Head of caudate nucleus (tissue), 42 donors: ENCODE measurements at regions of chr2 and their contacts with region 1.

Region 1: GRCh38 chr2:175366815-175367214 is 185.3 kb upstream of the ATP5MC3 start:
- DNase-seq: peak in 32 of 42 donors; percentile 4 to 63 (median 32)

Region 2: DNA sequence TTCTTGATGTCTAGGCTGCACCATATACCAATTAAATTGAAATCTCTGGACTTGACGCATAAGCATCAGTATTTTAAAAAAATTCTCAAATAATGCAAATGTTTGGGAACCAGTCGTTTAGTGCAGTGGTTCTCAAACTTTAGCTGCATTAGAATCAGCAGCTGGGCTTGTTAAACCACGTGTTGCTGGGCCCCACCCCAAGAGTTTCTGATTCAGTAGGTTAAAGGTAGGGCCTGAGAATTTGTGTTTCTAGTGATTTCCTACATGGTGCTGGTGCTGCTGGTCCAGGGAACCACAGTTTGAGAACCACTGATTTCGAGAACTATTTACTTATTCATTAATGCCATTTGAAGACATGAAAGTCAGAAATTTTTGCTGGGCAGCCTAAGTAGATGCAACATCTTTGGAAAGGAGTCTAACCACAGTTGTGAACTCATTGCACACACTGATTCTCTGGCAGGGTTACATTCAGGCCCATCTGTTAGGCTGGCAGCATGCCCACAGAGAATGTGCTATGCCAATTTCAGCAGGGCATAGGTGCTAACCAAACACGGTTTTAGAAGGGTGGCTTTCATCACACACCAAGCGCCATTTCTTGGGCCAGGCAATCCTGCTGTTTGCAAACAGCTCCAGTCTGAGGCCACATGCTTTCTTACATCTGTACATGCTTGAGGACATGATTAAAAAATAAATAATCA is 158.9 kb before region 1 on chr2:
- intact Hi-C with region 1: no loop called
- DNase-seq: peak in 21 of 42 donors; percentile 1 to 47 (median 17)

Region 3: DNA sequence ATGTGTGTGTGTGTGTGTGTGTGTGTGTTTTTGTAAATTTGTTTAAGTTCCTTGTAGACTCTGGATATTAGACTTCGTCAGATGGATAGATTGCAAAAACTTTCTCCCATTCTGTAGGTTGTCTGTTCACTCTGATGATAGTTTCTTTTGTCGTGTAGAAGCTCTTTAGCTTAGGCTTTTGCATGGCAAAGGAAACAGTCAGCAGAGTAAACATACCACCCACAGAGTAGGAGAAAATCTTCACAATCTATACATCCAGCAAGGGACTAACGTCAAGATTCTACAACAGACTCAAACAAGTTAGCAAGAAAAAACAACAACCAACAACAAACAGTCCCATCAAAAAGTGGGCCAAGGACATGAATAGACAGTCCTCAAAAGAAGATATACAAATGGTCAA is 151.4 kb after region 1 on chr2:
- intact Hi-C with region 1: no loop called
- DNase-seq: no peak

Region 4: DNA sequence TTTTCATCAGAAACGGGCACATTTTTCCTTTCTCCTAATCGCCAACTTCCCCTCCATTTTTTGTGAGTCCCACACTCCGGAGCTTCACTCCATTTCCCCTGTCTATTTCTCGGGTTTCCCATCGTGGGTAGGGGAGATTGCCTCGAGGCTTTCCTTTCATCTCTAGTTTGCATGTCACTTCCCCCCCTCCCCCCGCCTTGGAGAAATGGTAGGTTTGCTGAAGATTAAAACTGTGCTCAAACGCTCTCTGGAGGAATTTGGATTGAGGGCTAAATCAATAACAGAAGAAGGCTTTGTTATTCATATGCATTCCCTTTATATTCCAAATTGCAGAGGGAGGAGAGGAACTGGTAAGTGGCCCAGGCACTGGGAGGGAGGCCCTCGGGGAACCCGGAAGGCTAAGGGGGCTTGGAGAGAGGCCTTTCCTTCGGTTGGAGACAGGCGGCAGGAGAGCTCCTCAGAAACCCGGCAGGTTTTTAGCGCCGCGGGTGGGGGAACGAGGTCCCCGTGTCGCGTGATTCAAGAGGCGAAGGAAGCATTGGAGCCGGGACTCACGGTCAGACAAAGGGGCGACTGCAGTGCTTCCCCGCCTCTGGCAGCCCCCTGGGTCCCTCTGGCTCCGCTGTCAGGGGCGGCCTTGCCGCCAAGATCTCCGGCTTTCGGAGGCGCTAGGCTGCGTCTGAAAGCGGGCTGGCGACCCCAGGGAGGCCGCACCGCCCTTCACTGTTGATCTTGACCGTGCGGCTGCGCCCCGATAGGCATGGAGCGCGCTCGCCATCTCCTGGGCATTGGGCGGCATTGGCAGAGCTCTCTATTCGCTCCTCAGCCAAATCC is 730.4 kb after region 1 on chr2:
- intact Hi-C with region 1: loop called (anchors 10 kb)
- DNase-seq: peak in 39 of 42 donors; percentile 17 to 74 (median 46)